ENCODE measurements at regions of chr1 and their contacts with region 1.

Region 1: GRCh38 chr1:100459358-100460114 is 78.4 kb upstream of the GPR88 start:
- DNase-seq: peak; percentile 73
- ATAC-seq: peak; percentile 68
- H3K4me3 Mint-ChIP-seq: no peak overlapping the region
- H3K27ac Mint-ChIP-seq: no peak overlapping the region
- H3K4me1 Mint-ChIP-seq: peaks cover 44% of the 10 kb centered on the region
- H3K27me3 Mint-ChIP-seq: peaks cover 17% of the 10 kb centered on the region
- CTCF ChIP-seq: peak; percentile 51

Region 2: GRCh38 chr1:100265931-100266740 is 193.4 kb before region 1 on chr1 and contains the start of gene RTCA:
- CTCF ChIA-PET with region 1: interaction called, 21 read pairs
- POLR2A ChIA-PET with region 1: interaction called, 4 read pairs
- DNase-seq: peak; percentile 96
- ATAC-seq: peak; percentile 95
- H3K4me3 Mint-ChIP-seq: peak within 1 kb of the TSS; percentile 99
- H3K27ac Mint-ChIP-seq: peak within 1 kb of the TSS; percentile 96
- H3K4me1 Mint-ChIP-seq: peaks cover 10% of the 10 kb centered on the region
- H3K27me3 Mint-ChIP-seq: peaks cover 12% of the 10 kb centered on the region
- CTCF ChIP-seq: no peak
- total RNA-seq, gene RTCA: 31.1 to 35.7 TPM (median 35.2 TPM) in 3 replicates

Region 3: GRCh38 chr1:100423832-100424337 is 35.7 kb before region 1 on chr1:
- CTCF ChIA-PET with region 1: interaction called, 11 read pairs
- POLR2A ChIA-PET with region 1: no interaction called
- DNase-seq: no peak
- ATAC-seq: peak; percentile 29
- H3K4me3 Mint-ChIP-seq: no peak overlapping the region
- H3K27ac Mint-ChIP-seq: no peak overlapping the region
- H3K4me1 Mint-ChIP-seq: peaks cover 31% of the 10 kb centered on the region
- H3K27me3 Mint-ChIP-seq: no peaks in the 10 kb centered on the region
- CTCF ChIP-seq: no peak

Region 4: GRCh38 chr1:100543640-100544039 is 84.1 kb after region 1 on chr1:
- CTCF ChIA-PET with region 1: interaction called, 21 read pairs
- POLR2A ChIA-PET with region 1: no interaction called
- DNase-seq: peak; percentile 54
- ATAC-seq: peak; percentile 76
- H3K4me3 Mint-ChIP-seq: no peak overlapping the region
- H3K27ac Mint-ChIP-seq: no peak overlapping the region
- H3K4me1 Mint-ChIP-seq: 0 out of 2 replicates have a peak, but pooled peaks cover 3% of the 10 kb centered on the region
- H3K27me3 Mint-ChIP-seq: peaks cover 47% of the 10 kb centered on the region
- CTCF ChIP-seq: peak; percentile 38; the same call in 1 of the 2 replicates

Region 5: GRCh38 chr1:100565533-100565932 is 106.0 kb after region 1 on chr1:
- CTCF ChIA-PET with region 1: no interaction called
- POLR2A ChIA-PET with region 1: no interaction called
- DNase-seq: no peak
- ATAC-seq: no peak
- H3K4me3 Mint-ChIP-seq: no peak overlapping the region
- H3K27ac Mint-ChIP-seq: no peak overlapping the region
- H3K4me1 Mint-ChIP-seq: no peaks in the 10 kb centered on the region
- H3K27me3 Mint-ChIP-seq: no peaks in the 10 kb centered on the region; the same call in 1 of the 2 replicates
- CTCF ChIP-seq: no peak

Measured in WTC11 (cell line).